GM10248 (cell line): ENCODE measurements at regions of chr13 and their contacts with region 1.

Region 1: DNA sequence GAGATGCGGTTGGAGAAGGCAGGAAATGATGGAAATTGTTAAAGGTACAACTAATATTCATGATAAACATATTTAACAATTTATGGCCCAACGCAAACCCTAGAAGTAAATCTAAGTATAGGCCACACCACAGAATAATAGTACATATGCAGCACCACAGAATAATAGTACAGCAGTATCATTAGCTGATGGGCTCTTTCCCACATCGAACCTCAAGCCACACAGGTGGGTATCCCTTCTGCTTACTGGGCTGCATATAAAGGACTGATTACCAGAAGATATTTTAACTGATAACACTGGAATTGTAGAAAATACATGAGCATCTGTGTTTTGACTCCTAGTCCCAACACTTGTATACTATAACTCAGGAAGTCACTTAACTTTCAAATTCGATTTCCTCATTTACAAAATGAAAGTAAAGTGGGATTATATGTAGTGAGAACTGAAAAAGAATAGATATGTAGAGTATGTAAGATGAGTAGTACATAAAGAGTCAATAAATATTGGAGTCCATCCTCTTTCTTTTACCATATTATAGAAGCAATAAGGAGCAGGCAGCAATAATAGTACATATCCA is 91.5 kb downstream of the TSC22D1 start:
- DNase-seq: no peak
- CTCF ChIP-seq: no peak

Region 2: GRCh38 chr13:44340508-44340907 is 144.1 kb before region 1 on chr13:
- CTCF ChIA-PET with region 1: no interaction called
- POLR2A ChIA-PET with region 1: no interaction called
- DNase-seq: no peak
- CTCF ChIP-seq: no peak

Region 3: GRCh38 chr13:44498969-44499368 is 14.3 kb after region 1 on chr13:
- CTCF ChIA-PET with region 1: interaction called, 19 read pairs
- POLR2A ChIA-PET with region 1: no interaction called
- DNase-seq: no peak
- CTCF ChIP-seq: no peak

Region 4: DNA sequence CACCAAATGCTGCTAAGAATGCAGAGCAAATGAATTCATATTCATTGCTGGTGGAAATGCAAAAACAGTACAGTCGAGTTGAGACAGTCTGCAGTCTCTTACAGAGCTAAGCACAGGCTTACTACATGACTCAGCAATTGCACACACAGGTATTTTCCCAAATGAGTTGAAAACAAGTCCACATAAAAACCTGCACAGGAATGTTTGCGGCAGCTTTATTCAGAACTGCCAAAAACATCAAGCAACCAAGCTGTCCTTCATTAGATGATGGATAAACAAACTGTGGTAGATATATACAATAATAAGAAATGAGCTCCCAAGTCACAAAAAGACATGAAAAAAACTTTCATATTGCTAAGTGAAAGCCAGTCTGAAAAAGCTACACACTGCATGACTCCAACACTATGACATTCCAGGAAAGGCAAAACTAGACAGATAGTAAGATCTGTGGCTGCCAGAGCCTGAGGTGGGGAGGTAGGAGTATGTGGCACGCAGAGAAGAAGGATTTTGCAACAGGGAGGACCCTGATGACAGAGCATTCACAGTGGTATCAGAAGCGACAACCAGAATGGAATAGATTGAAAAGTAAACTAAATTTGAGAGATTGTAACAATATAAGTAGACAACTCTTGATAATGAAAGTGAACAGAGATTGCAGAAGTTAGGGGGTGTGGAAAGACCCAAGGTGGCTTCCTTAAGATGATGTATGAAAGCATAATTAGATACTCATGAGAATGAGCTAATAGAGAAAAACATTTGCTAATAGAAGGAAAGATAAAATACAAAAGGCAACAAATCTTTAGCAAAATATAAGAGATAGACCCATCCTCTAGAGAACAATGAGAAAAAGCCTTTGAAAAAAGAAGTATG is 38.7 kb after region 1 on chr13:
- CTCF ChIA-PET with region 1: interaction called, 13 read pairs
- POLR2A ChIA-PET with region 1: no interaction called
- DNase-seq: peak; percentile 14
- CTCF ChIP-seq: no peak

Region 5: GRCh38 chr13:44917589-44918325 is 433.1 kb after region 1 on chr13:
- CTCF ChIA-PET with region 1: interaction called, 17 read pairs
- POLR2A ChIA-PET with region 1: no interaction called
- DNase-seq: peak; percentile 87
- CTCF ChIP-seq: peak; percentile 4